ENCODE measurements at regions of chr12 and their contacts with region 1.

Region 1: GRCh38 chr12:117936722-117937484 is 31.9 kb downstream of the KSR2 start:
- DNase-seq: no peak
- ATAC-seq: no peak
- H3K4me3 ChIP-seq: no peak overlapping the region
- H3K4me3 Mint-ChIP-seq: no peak overlapping the region
- H3K27ac ChIP-seq: no peak overlapping the region
- H3K27ac Mint-ChIP-seq: no peak overlapping the region
- H3K4me1 ChIP-seq: no peaks in the 10 kb centered on the region
- H3K4me1 Mint-ChIP-seq: no peaks in the 10 kb centered on the region
- H3K27me3 ChIP-seq: peaks cover 0 to 6% of the 10 kb centered on the region in 2 experiments
- H3K27me3 Mint-ChIP-seq: peaks cover 16 to 17% of the 10 kb centered on the region in 2 donors

Region 2: GRCh38 chr12:118061011-118061875 is 124.3 kb after region 1 on chr12 and contains the start of gene WSB2:
- CTCF ChIA-PET with region 1: no interaction called
- POLR2A ChIA-PET with region 1: interaction called in 1 of 2 experiments, 11 read pairs
- DNase-seq: peak in 31 of 35 experiments; percentile 5 to 60 (median 28)
- ATAC-seq: peak; percentile 42 to 55 (median 54)
- H3K4me3 ChIP-seq: peak within 1 kb of the TSS; percentile 86 to 97
- H3K4me3 Mint-ChIP-seq: peak within 1 kb of the TSS; percentile 86 to 91 (median 90)
- H3K27ac ChIP-seq: peak within 1 kb of the TSS; percentile 93
- H3K27ac Mint-ChIP-seq: peak within 1 kb of the TSS; percentile 94 to 96
- H3K4me1 ChIP-seq: peaks cover 16 to 23% of the 10 kb centered on the region in 2 experiments
- H3K4me1 Mint-ChIP-seq: peaks cover 47 to 60% (median 57%) of the 10 kb centered on the region in 3 donors
- H3K27me3 ChIP-seq: no peaks in the 10 kb centered on the region
- H3K27me3 Mint-ChIP-seq: no peaks in the 10 kb centered on the region
- total RNA-seq, gene WSB2: 19.6 to 33.7 (median 25.8) TPM